ENCODE measurements at regions of chr4 and their contacts with region 1.

Region 1: DNA sequence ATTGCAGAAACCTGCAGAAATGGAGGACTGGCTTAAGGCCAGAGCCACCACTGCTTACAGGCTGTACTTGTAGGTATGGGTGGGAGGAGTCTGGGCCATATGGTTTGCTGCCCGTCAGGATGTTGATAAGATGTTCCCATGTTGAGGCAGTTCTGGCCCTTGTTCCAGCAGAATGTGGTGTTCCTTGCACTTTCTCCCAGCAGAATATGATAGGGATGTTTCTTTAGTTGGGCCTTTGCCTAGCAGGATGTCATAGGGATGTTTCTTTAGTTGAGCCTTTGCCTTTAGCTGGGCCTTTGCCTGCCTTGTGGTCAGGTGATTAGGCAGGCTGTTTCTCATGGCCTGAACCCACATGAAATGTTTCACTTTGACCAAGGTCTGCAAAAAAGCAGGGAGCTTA is 139.1 kb upstream of the PAQR3 start:
- DNase-seq: peak; percentile 4
- H3K4me3 ChIP-seq: no peak overlapping the region
- H3K27ac ChIP-seq: no peak overlapping the region
- H3K4me1 ChIP-seq: no peaks in the 10 kb centered on the region
- H3K27me3 ChIP-seq: no peaks in the 10 kb centered on the region
- CTCF ChIP-seq: no peak
- POLR2A ChIP-seq: no peak

Region 2: GRCh38 chr4:78529569-78530209 is 548.6 kb before region 1 on chr4:
- intact Hi-C with region 1: no loop called
- DNase-seq: no peak
- H3K4me3 ChIP-seq: no peak overlapping the region
- H3K27ac ChIP-seq: no peak overlapping the region
- H3K4me1 ChIP-seq: no peaks in the 10 kb centered on the region
- H3K27me3 ChIP-seq: no peaks in the 10 kb centered on the region
- CTCF ChIP-seq: no peak
- POLR2A ChIP-seq: no peak

Region 3: DNA sequence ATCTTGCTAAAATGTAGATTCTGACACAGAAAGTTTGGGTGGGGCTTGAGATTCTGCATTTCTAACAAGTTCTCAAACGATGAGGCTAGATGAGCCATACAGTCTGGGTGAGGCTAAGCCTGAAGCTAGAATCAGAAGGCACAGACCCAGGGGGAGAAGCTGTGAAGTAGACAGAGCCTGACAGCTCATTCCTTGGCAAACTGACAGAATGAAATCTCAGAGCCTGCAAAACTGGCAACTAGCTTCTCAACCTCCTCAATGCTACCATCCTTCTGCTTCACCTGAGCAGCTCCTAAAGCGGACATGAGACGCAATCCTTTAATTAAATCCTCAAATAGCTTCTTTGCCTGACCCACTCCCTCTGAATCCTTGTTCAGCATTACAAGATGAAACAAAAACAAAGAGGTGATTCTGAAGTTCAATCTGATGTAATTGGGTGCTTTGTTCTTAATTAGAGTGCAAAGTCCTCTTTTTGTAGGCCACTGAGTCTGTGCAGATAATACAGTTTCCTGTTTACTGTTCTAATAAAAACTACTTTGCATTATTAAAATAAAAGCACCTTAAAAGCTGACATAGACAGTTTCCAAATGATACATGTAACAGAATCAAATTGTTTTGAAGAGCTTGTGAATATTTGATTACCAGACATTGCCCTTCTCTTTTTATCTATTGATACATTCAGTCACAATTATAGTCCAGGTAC is 373.2 kb before region 1 on chr4:
- intact Hi-C with region 1: no loop called
- DNase-seq: no peak
- H3K4me3 ChIP-seq: no peak overlapping the region
- H3K27ac ChIP-seq: no peak overlapping the region
- H3K4me1 ChIP-seq: no peaks in the 10 kb centered on the region
- H3K27me3 ChIP-seq: no peaks in the 10 kb centered on the region
- CTCF ChIP-seq: no peak
- POLR2A ChIP-seq: no peak

Region 4: DNA sequence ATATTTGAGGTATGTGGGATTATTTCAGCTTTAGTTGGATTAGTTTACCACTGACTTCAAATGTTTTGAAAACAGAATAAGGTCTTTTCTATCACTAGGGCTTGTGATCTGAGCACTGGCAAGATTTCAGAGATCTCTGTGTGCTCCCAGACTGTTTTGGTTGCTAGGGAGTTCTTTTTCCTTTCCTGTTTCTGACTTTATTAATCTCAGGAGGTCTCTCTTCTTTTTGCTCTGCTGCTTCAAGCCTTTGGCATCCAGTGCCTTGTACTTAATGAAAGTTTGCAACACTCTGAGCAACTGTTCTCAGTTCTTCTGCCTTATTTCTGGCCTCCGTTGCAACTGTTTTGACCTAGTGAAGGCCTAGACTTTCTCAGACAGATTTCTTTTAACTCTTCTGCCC is 107.0 kb before region 1 on chr4:
- intact Hi-C with region 1: loop called (anchors 10 kb)
- DNase-seq: no peak
- H3K4me3 ChIP-seq: no peak overlapping the region
- H3K27ac ChIP-seq: peak overlapping the region; percentile 54 to 56
- H3K4me1 ChIP-seq: no peaks in the 10 kb centered on the region
- H3K27me3 ChIP-seq: no peaks in the 10 kb centered on the region
- CTCF ChIP-seq: no peak
- POLR2A ChIP-seq: no peak